ENCODE measurements at regions of chr4 and their contacts with region 1.

Region 1: DNA sequence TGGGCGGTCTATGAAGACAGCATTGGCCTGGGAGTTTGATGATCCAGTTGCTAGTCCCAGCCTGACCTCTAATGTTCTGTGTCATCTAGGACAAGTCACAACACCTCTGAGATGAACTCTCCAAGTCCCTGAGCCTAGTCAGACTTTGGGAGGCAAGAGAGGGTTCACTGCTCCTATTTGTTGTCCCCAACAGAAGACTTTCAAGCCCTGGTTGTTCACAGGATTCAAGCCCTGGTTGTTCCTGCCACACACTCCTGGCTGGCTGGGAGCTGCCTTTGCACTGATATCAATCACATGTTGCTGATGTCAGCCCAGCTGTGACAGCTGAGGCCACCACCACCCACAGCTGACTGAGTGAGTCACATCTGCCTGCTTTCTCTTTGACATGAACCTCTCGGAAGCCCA is 253.2 kb upstream of the RASGEF1B start:
- DNase-seq: peak; percentile 81
- H3K4me3 Mint-ChIP-seq: no peak overlapping the region
- H3K27ac Mint-ChIP-seq: peak overlapping the region; percentile 72
- H3K4me1 Mint-ChIP-seq: peaks cover 9% of the 10 kb centered on the region
- H3K27me3 Mint-ChIP-seq: peaks cover 10% of the 10 kb centered on the region

Region 2: GRCh38 chr4:81786063-81786763 is 61.3 kb after region 1 on chr4:
- intact Hi-C with region 1: loop called (anchors 5 kb)
- DNase-seq: no peak
- H3K4me3 Mint-ChIP-seq: no peak overlapping the region
- H3K27ac Mint-ChIP-seq: no peak overlapping the region
- H3K4me1 Mint-ChIP-seq: peaks cover 9% of the 10 kb centered on the region
- H3K27me3 Mint-ChIP-seq: no peaks in the 10 kb centered on the region

Region 3: GRCh38 chr4:81827577-81828202 is 102.8 kb after region 1 on chr4:
- intact Hi-C with region 1: loop called (anchors 10 kb)
- DNase-seq: no peak
- H3K4me3 Mint-ChIP-seq: no peak overlapping the region
- H3K27ac Mint-ChIP-seq: peak overlapping the region; percentile 71
- H3K4me1 Mint-ChIP-seq: peaks cover 9% of the 10 kb centered on the region
- H3K27me3 Mint-ChIP-seq: no peaks in the 10 kb centered on the region

Measured in activated CD4-positive, alpha-beta T cell treated with anti-CD3 and anti-CD28 coated beads, Interleukin-2, amount 10 ng/mL, durations not matched to agents 24 days and 14 days (primary cell).